ENCODE measurements at regions of chr22 and their contacts with region 1.

Region 1: GRCh38 chr22:22810018-22810427 is 77.6 kb upstream of the IGLL5 start:
- DNase-seq: no peak
- ATAC-seq: peak; percentile 97
- H3K4me3 ChIP-seq: no peak overlapping the region
- H3K27ac ChIP-seq: no peak overlapping the region
- H3K4me1 ChIP-seq: no peaks in the 10 kb centered on the region; the same call in 1 of the 2 replicates
- H3K27me3 ChIP-seq: no peaks in the 10 kb centered on the region
- CTCF ChIP-seq: peak; percentile 40 to 82 (median 67); a peak in 5 of 6 replicates
- EP300 ChIP-seq: no peak
- POLR2A ChIP-seq: no peak
- RAD21 ChIP-seq: no peak

Region 2: GRCh38 chr22:22538226-22538989 is 271.6 kb before region 1 on chr22:
- CTCF ChIA-PET with region 1: no interaction called
- POLR2A ChIA-PET with region 1: no interaction called
- RAD21 ChIA-PET with region 1: no interaction called
- SMC1A ChIA-PET with region 1: no interaction called
- in situ Hi-C with region 1: no loop called
- intact Hi-C with region 1: no loop called
- DNase-seq: no peak
- ATAC-seq: no peak
- H3K4me3 ChIP-seq: no peak overlapping the region
- H3K27ac ChIP-seq: no peak overlapping the region
- H3K4me1 ChIP-seq: no peaks in the 10 kb centered on the region
- H3K27me3 ChIP-seq: no peaks in the 10 kb centered on the region
- CTCF ChIP-seq: no peak
- EP300 ChIP-seq: no peak
- POLR2A ChIP-seq: no peak
- RAD21 ChIP-seq: no peak

Region 3: DNA sequence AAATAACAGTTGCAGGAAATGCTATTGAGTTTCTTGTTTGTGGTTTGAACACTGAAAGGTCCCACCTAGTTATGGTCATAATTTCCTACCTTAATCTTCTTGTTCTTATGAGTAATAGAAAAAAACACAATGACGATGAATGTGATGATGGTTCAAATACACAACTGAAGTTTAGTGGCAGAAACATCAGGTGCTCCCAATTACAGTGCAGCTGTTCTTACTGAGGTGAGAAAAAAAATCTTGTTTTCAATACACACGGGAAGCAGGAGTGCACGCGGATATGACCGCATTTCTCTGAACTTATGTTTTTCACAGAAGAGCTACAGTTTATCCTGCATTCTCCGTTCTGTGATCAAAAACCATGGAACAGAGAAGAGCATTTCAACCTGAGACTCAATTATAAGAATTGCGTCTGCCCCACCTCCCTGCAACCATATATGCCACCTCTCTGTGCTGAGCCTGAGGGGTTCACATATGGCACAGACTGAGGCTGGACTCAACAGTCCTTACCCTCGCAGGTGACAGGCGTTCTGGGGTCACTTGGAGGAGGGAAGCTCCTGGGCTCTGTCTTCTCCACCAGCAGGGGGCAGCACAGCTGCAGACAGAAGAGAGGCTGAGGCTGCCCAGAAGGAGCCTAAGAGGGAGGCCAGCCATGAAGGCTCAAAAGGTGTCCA is 22.1 kb before region 1 on chr22:
- CTCF ChIA-PET with region 1: interaction called, 43 read pairs
- POLR2A ChIA-PET with region 1: interaction called, 3 read pairs
- RAD21 ChIA-PET with region 1: interaction called, 8 read pairs
- SMC1A ChIA-PET with region 1: interaction called, 6 read pairs
- in situ Hi-C with region 1: no loop called
- intact Hi-C with region 1: no loop called
- DNase-seq: no peak
- ATAC-seq: peak; percentile 92
- H3K4me3 ChIP-seq: no peak overlapping the region
- H3K27ac ChIP-seq: no peak overlapping the region
- H3K4me1 ChIP-seq: no peaks in the 10 kb centered on the region
- H3K27me3 ChIP-seq: no peaks in the 10 kb centered on the region
- CTCF ChIP-seq: peak; percentile 49 to 79 (median 59)
- EP300 ChIP-seq: no peak
- POLR2A ChIP-seq: no peak
- RAD21 ChIP-seq: no peak

Region 4: GRCh38 chr22:22848364-22848866 is 38.4 kb after region 1 on chr22:
- CTCF ChIA-PET with region 1: interaction called, 158 read pairs
- POLR2A ChIA-PET with region 1: no interaction called
- RAD21 ChIA-PET with region 1: interaction called, 40 read pairs
- SMC1A ChIA-PET with region 1: interaction called, 83 read pairs
- in situ Hi-C with region 1: no loop called
- intact Hi-C with region 1: loop called (anchors 1 kb)
- DNase-seq: no peak
- ATAC-seq: peak; percentile 91
- H3K4me3 ChIP-seq: no peak overlapping the region
- H3K27ac ChIP-seq: no peak overlapping the region
- H3K4me1 ChIP-seq: peaks cover 18% of the 10 kb centered on the region
- H3K27me3 ChIP-seq: no peaks in the 10 kb centered on the region
- CTCF ChIP-seq: peak; percentile 49 to 79 (median 78)
- EP300 ChIP-seq: no peak
- POLR2A ChIP-seq: no peak
- RAD21 ChIP-seq: no peak

Region 5: DNA sequence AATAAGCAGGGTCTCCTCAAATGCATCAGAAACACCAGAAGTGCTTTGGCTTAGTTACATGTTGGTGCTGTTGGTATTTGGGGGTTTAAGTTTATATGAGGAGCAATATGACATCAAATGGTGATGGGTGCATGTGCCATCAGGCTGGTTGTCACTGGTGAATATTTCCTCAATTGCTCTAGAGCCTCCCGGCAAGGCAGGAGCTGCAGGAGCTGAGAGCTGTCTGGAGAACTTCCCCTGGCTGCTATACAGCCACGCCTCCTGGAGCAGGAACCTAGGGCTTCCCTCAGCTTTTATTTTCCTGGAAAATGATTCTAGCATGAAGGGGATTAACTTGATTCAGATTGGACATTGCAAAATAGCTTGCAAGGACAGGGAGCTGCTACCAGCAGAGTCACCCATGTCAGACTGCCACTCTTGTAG is 93.3 kb after region 1 on chr22:
- CTCF ChIA-PET with region 1: no interaction called
- POLR2A ChIA-PET with region 1: no interaction called
- RAD21 ChIA-PET with region 1: interaction called, 4 read pairs
- SMC1A ChIA-PET with region 1: no interaction called
- in situ Hi-C with region 1: no loop called
- intact Hi-C with region 1: loop called (anchors 5 kb)
- DNase-seq: no peak
- ATAC-seq: peak; percentile 0; the same call in 1 of the 3 replicates
- H3K4me3 ChIP-seq: no peak overlapping the region
- H3K27ac ChIP-seq: peak overlapping the region; percentile 93
- H3K4me1 ChIP-seq: peaks cover 28% of the 10 kb centered on the region
- H3K27me3 ChIP-seq: no peaks in the 10 kb centered on the region
- CTCF ChIP-seq: no peak
- EP300 ChIP-seq: no peak
- POLR2A ChIP-seq: no peak
- RAD21 ChIP-seq: no peak

Region 6: GRCh38 chr22:22942511-22943329 is 132.7 kb after region 1 on chr22:
- CTCF ChIA-PET with region 1: interaction called, 44 read pairs
- POLR2A ChIA-PET with region 1: no interaction called
- RAD21 ChIA-PET with region 1: interaction called, 22 read pairs
- SMC1A ChIA-PET with region 1: interaction called, 29 read pairs
- in situ Hi-C with region 1: no loop called
- intact Hi-C with region 1: no loop called
- DNase-seq: peak; percentile 78
- ATAC-seq: peak; percentile 89
- H3K4me3 ChIP-seq: no peak overlapping the region
- H3K27ac ChIP-seq: peak overlapping the region; percentile 92
- H3K4me1 ChIP-seq: peaks cover 90% of the 10 kb centered on the region
- H3K27me3 ChIP-seq: no peaks in the 10 kb centered on the region
- CTCF ChIP-seq: peak; percentile 84 to 96 (median 87)
- EP300 ChIP-seq: 0 out of 4 replicates have a peak, but pooled peaks of 1 of the 2 experiments have one; percentile 61
- POLR2A ChIP-seq: no peak; the same call in 1 of the 2 replicates
- RAD21 ChIP-seq: peak; percentile 94

Region 7: DNA sequence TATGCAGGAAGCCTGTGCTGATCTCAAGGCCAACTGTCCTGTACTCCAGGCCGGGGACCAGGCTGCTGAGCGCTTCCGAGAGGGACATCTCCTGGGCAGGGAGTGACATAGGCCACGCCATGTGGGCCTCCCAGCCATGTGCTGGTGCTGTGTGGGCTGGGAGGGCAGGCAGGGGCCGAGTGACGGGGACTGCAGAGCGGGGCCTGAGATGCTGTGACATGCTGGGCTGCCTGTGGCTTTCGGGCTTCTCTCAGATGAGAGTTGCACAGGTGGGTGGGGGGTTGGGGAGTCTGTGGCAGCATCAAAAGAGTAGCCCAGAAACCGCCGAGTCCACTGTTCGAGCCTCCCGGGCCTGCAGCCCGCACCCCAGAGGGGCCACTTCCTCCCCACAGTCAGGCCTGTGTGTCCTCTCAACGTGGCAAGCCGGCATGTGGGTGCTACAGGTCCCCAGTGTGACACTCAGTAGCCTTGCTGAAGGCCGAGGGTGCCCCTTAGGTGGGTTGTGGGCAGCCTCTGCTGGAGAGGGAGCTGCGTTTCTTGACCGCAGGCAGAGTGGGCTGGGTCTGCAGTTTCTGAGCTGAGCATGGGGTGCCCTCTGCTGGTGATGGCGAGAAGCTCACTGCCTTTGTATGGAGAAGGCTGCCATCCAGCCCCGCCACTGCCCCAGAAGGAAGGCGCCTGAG is 471.5 kb after region 1 on chr22:
- CTCF ChIA-PET with region 1: no interaction called
- POLR2A ChIA-PET with region 1: no interaction called
- RAD21 ChIA-PET with region 1: no interaction called
- SMC1A ChIA-PET with region 1: no interaction called
- in situ Hi-C with region 1: loop called (anchors 25 kb)
- intact Hi-C with region 1: no loop called
- DNase-seq: peak; percentile 25
- ATAC-seq: peak; percentile 94
- H3K4me3 ChIP-seq: no peak overlapping the region
- H3K27ac ChIP-seq: 0 out of 2 replicates have a peak overlapping the region, but pooled peaks have one; percentile 13
- H3K4me1 ChIP-seq: peaks cover 11% of the 10 kb centered on the region
- H3K27me3 ChIP-seq: no peaks in the 10 kb centered on the region
- CTCF ChIP-seq: peak; percentile 93 to 96 (median 94); a peak in 5 of 6 replicates
- EP300 ChIP-seq: no peak
- POLR2A ChIP-seq: no peak
- RAD21 ChIP-seq: peak; percentile 91

Measured in GM12878 (cell line).